Breast epithelium (tissue), 4 donors: ENCODE measurements at regions of chr11 and their contacts with region 1.

Region 1: GRCh38 chr11:108241330-108242037 is 18.6 kb downstream of the ATM start:
- DNase-seq: no peak
- H3K4me3 ChIP-seq: no peak overlapping the region
- H3K27ac ChIP-seq: no peak overlapping the region
- H3K4me1 ChIP-seq: no peaks in the 10 kb centered on the region
- H3K27me3 ChIP-seq: no peaks in the 10 kb centered on the region
- CTCF ChIP-seq: no peak
- POLR2A ChIP-seq: no peak

Region 2: DNA sequence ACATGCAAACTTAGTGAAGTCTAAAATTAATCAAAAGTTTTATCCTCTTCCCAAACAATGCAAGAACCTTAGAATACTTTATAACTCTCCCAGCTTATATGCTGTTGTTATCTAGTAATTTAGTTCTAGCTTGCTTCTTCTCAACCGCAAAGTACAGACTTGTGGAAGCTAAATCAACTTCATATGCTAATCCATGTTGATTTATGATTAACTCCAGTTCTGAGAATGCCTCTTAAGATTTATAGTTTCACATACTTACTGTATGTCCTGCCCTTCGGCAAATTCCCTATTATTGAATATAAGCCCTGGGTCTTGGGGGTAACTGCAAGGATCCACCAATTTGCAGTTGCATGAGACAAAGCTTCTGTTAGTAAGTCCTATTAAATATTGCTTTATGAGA is 365.3 kb before region 1 on chr11:
- intact Hi-C with region 1: loop called (anchors 5 kb)
- DNase-seq: no peak
- H3K4me3 ChIP-seq: no peak overlapping the region
- H3K27ac ChIP-seq: no peak overlapping the region
- H3K4me1 ChIP-seq: no peaks in the 10 kb centered on the region
- H3K27me3 ChIP-seq: no peaks in the 10 kb centered on the region
- CTCF ChIP-seq: no peak
- POLR2A ChIP-seq: no peak

Region 3: GRCh38 chr11:108253176-108253575 is 11.7 kb after region 1 on chr11:
- intact Hi-C with region 1: no loop called
- DNase-seq: no peak
- H3K4me3 ChIP-seq: no peak overlapping the region
- H3K27ac ChIP-seq: no peak overlapping the region
- H3K4me1 ChIP-seq: no peaks in the 10 kb centered on the region
- H3K27me3 ChIP-seq: no peaks in the 10 kb centered on the region
- CTCF ChIP-seq: no peak
- POLR2A ChIP-seq: no peak